ENCODE measurements at regions of chr1 and their contacts with region 1.

Region 1: GRCh38 chr1:32411261-32411660 is 17.0 kb upstream of the BSDC1 start:
- DNase-seq: no peak
- ATAC-seq: no peak
- H3K4me3 Mint-ChIP-seq: no peak overlapping the region
- H3K27ac Mint-ChIP-seq: no peak overlapping the region
- H3K4me1 Mint-ChIP-seq: 0 out of 2 replicates have a peak, but pooled peaks cover 5% of the 10 kb centered on the region
- H3K27me3 Mint-ChIP-seq: peaks cover 32% of the 10 kb centered on the region
- CTCF ChIP-seq: no peak

Region 2: GRCh38 chr1:32372149-32372756 is 39.0 kb before region 1 on chr1:
- CTCF ChIA-PET with region 1: no interaction called
- POLR2A ChIA-PET with region 1: no interaction called
- DNase-seq: no peak
- ATAC-seq: no peak
- H3K4me3 Mint-ChIP-seq: no peak overlapping the region
- H3K27ac Mint-ChIP-seq: no peak overlapping the region
- H3K4me1 Mint-ChIP-seq: no peaks in the 10 kb centered on the region
- H3K27me3 Mint-ChIP-seq: no peaks in the 10 kb centered on the region
- CTCF ChIP-seq: no peak

Region 3: DNA sequence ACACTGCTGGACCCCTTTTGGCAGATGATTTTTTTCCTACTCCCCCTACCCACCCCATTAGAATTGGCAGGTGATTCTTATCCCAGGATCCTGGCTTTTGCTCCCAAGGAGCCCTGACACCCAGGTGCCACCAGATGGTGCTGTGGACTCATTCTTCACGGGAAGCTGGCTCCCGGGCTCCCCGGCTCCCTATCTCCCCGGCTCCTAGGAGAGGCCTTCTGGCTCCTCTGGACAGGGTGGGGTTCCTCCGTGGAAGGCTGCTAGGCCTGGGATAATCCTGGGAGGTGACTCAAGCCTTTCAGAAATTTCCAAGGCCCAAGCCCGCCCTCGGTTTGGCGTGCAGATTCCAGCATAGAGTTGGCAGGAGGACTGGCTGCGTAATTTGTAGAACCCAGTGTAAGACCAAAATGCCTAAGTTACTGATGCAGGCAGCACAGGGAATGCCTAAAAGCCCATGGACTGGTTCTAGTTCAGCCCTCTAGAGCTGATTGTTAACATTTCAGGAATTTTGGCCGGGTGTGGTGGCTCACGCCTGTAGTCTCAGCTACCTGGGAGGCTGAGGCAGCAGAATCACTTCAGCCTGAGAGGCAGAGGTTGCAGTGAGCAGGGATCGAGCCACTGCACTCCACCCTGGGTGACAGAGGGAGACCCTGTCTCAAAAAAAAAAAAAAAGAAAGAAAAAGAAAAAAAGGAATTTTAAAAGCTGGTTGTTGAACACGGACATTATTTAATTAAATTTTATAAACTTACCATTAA is 10.2 kb before region 1 on chr1:
- CTCF ChIA-PET with region 1: interaction called, 12 read pairs
- POLR2A ChIA-PET with region 1: no interaction called
- DNase-seq: peak; percentile 91
- ATAC-seq: peak; percentile 98
- H3K4me3 Mint-ChIP-seq: no peak overlapping the region
- H3K27ac Mint-ChIP-seq: no peak overlapping the region; the same call in 1 of the 2 replicates
- H3K4me1 Mint-ChIP-seq: no peaks in the 10 kb centered on the region; the same call in 1 of the 2 replicates
- H3K27me3 Mint-ChIP-seq: no peaks in the 10 kb centered on the region
- CTCF ChIP-seq: peak; percentile 78

Region 4: GRCh38 chr1:32438136-32438535 is 26.9 kb after region 1 on chr1:
- CTCF ChIA-PET with region 1: no interaction called
- POLR2A ChIA-PET with region 1: no interaction called
- DNase-seq: peak; percentile 33
- ATAC-seq: peak; percentile 96
- H3K4me3 Mint-ChIP-seq: peak overlapping the region; percentile 29; the same call in 1 of the 2 replicates
- H3K27ac Mint-ChIP-seq: peak overlapping the region; percentile 99
- H3K4me1 Mint-ChIP-seq: peaks cover 26% of the 10 kb centered on the region
- H3K27me3 Mint-ChIP-seq: peaks cover 6% of the 10 kb centered on the region
- CTCF ChIP-seq: no peak

Region 5: GRCh38 chr1:32474954-32475353 is 63.7 kb after region 1 on chr1:
- CTCF ChIA-PET with region 1: no interaction called
- POLR2A ChIA-PET with region 1: no interaction called
- DNase-seq: no peak
- ATAC-seq: no peak
- H3K4me3 Mint-ChIP-seq: no peak overlapping the region
- H3K27ac Mint-ChIP-seq: no peak overlapping the region
- H3K4me1 Mint-ChIP-seq: peaks cover 2% of the 10 kb centered on the region; the same call in 1 of the 2 replicates
- H3K27me3 Mint-ChIP-seq: no peaks in the 10 kb centered on the region
- CTCF ChIP-seq: no peak